Vagina (tissue), 2 donors: ENCODE measurements at regions of chr18 and their contacts with region 1.

Region 1: DNA sequence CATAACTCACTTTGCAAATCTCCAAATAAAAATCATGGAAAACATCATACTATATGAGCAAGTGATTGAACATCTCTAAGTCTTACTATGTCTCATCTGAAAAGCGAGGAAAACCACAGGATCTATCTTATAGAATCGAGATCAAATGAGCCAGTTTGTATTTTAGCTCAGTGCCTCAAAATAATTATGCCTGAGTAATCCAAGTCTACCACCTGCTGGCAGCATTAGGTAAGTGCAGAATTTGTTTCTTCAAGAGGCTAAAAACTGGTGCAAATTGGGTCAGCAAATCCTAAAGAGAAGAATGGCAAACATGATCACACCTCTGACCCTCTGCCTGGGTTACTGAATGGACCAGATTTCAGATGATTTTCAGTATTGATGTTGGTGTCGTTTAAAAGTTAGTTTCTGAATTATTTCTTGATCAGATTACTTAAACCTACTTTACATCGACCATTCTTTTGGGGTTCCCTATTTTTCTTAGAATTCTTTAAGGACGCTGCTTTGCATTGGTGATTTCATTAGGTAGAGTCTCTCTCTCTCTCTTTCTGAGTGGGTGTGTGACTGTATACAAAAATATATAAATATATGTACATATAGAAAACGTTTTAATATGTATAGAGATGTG is 12.7 kb upstream of the FHOD3 start:
- DNase-seq: no peak
- H3K4me3 ChIP-seq: no peak overlapping the region
- H3K27ac ChIP-seq: no peak overlapping the region
- H3K4me1 ChIP-seq: no peaks in the 10 kb centered on the region
- H3K27me3 ChIP-seq: no peaks in the 10 kb centered on the region
- CTCF ChIP-seq: peak; percentile 81 to 87 (median 86)
- POLR2A ChIP-seq: no peak

Region 2: DNA sequence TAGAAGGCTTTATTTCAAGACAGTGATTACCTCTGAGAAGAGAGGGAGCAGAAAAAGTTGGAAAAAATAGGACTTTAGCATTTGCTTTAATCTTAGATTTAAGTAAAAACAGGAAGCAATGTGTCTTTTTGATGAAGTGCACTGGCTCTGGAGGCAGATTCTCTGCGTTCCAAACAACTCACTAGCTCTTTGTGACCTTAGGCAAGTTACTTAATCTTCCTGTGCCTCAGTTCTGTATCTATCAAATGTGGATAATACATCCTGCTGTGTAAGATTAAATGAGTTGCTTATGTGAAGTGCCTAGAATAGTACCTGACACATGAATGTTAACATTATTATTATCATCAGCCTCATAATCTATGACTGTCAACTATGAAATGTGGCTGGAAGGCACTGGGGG is 259.8 kb before region 1 on chr18:
- intact Hi-C with region 1: loop called (anchors 10 kb)
- DNase-seq: no peak
- H3K4me3 ChIP-seq: no peak overlapping the region
- H3K27ac ChIP-seq: no peak overlapping the region
- H3K4me1 ChIP-seq: no peaks in the 10 kb centered on the region
- H3K27me3 ChIP-seq: no peaks in the 10 kb centered on the region
- CTCF ChIP-seq: no peak
- POLR2A ChIP-seq: no peak

Region 3: GRCh38 chr18:36095936-36096519 is 188.8 kb before region 1 on chr18:
- intact Hi-C with region 1: loop called (anchors 5 kb)
- DNase-seq: no peak
- H3K4me3 ChIP-seq: no peak overlapping the region
- H3K27ac ChIP-seq: no peak overlapping the region
- H3K4me1 ChIP-seq: no peaks in the 10 kb centered on the region
- H3K27me3 ChIP-seq: no peaks in the 10 kb centered on the region
- CTCF ChIP-seq: peak in 2 of 3 experiments; percentile 37 to 43
- POLR2A ChIP-seq: no peak

Region 4: GRCh38 chr18:36241831-36242230 is 43.0 kb before region 1 on chr18:
- intact Hi-C with region 1: no loop called
- DNase-seq: no peak
- H3K4me3 ChIP-seq: no peak overlapping the region
- H3K27ac ChIP-seq: no peak overlapping the region
- H3K4me1 ChIP-seq: no peaks in the 10 kb centered on the region
- H3K27me3 ChIP-seq: no peaks in the 10 kb centered on the region
- CTCF ChIP-seq: no peak
- POLR2A ChIP-seq: no peak